Ascending aorta (tissue), 2 donors: ENCODE measurements at regions of chr4 and their contacts with region 1.

Region 1: GRCh38 chr4:56907489-56908205 is at the start of gene REST:
- DNase-seq: peak in 1 of 2 donors; percentile 88
- H3K4me3 ChIP-seq: peak within 1 kb of the TSS; percentile 92 to 94
- H3K27ac ChIP-seq: peak within 1 kb of the TSS; percentile 81 to 88
- H3K4me1 ChIP-seq: peaks cover 0 to 12% of the 10 kb centered on the region in 2 donors
- H3K27me3 ChIP-seq: no peaks in the 10 kb centered on the region
- CTCF ChIP-seq: no peak
- total RNA-seq, gene REST: 86.5 TPM

Region 2: DNA sequence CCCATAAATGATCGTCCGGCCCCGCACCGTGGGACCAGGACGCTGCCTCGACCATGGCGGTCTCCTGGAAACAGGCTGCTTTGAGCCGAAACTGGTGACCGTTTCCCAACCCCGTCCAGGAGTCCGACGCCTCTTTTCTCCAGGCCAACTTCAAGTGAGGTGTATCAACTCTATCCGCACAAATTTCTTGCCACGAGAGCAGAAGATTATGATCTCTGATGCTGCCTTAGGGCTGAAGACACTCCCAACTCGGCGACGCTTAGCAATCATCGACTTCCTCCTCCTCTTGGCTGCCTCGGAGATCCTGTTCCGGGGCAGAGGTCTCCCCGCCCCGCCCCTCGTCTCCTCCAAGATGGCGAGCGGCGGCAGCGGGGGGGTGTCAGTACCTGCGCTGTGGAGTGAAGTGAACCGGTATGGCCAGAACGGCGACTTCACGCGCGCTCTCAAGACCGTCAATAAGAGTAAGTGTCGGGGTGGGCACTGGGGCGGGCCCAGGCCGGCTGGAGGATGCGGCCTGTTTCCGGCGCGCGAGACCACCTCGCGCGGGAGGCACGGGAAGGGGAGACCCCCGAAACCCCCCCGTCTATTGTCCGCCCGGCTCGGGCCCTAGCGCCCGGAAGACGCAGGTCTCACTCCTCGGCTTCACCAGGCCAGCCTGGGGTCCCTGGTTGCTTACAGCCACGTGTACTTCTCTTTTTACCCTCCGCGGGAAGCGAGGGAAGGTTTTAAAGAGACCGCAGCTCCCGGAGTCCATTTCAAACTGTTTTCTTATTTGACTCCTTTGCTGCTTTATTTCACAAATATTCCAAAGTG is 440.2 kb before region 1 on chr4 and contains the start of gene SRP72:
- intact Hi-C with region 1: loop called (anchors 10 kb)
- DNase-seq: peak; percentile 66 to 94
- H3K4me3 ChIP-seq: peak within 1 kb of the TSS; percentile 93 to 96
- H3K27ac ChIP-seq: peak within 1 kb of the TSS; percentile 84 to 93
- H3K4me1 ChIP-seq: peaks cover 8 to 22% of the 10 kb centered on the region in 2 donors
- H3K27me3 ChIP-seq: no peaks in the 10 kb centered on the region
- CTCF ChIP-seq: no peak
- total RNA-seq, gene SRP72: 89.4 TPM

Region 3: DNA sequence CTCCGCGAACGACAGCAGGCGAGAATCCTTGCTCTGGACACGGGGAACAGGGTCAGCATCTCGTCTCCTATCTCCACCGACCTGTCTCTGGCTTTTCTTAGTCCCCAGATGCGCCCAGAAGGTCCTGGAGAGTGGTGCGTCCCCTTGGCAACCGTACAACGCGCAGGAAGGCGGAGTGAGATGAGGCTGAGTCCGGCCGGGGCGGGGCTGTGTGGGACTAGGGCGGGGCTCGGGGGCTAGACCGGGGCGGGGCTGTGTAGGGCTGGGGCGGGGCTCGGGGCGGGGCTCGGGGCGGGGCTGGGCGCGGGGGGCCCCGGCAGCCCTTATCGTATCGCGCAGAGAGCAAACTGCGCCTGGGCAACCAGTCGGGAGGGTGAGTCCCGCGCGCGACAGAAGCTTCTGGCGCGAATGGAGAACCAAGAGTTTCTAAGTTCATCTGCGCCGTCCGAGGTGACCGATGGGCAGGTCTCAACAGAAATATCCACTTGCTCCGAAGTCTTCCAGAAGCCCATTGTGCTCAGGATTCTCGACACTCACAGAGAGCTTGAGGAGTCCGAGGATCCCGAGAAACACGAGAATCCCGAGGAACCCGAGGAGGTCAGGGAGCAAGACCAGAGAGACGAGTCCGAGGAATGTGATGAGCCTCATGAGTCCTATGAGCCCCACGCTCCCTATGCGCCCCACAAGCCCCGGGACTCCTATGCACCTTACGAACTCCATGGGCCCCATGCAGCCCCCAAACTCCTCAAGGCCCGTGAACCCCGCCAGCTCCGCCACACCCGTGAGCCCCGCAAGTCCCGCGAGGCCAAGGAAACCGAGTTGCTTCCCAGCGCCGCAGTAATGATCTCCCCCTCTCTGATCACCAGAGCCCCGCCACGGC is 377.1 kb before region 1 on chr4:
- intact Hi-C with region 1: loop called (anchors 2 kb)
- DNase-seq: peak; percentile 48 to 93
- H3K4me3 ChIP-seq: peak overlapping the region; percentile 55 to 63
- H3K27ac ChIP-seq: no peak overlapping the region
- H3K4me1 ChIP-seq: peaks cover 0 to 7% of the 10 kb centered on the region in 2 donors
- H3K27me3 ChIP-seq: no peaks in the 10 kb centered on the region
- CTCF ChIP-seq: no peak

Region 4: DNA sequence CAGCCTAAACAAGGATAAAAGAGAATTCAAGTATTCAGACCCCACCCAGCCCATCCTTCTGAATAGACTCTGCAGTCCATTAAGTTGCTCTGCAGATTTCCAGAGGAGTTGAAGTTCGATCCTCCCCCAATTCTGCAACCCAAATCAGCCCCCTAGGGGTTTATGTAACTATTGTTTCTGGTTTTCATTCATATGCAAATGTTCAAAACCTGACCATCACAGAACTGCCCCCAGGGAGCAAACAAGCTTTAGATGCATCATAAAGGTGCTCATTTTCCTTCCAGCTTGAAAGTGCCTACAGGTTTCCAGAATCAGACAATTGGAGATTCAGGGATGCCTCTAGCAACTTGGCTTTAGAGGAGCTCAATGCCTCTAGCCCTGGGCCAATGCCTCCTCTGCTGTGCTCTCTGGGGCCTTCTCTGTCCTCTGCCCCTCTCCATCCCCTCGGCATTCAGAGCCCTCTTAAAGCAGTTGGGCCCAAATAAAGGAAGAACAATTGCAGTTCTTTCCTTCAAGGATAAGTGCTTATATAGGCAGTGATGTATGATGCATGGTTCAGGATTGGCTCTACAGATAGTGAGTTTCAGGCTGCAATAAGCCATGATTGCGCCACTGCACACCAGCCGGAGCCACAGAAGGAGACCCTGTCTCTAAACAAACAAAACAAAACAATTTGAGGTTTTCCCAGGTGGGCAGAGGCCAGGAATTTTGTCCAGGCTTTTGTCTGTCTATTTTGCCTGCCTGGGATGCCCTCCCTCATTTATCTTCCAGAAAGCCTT is 62.7 kb before region 1 on chr4:
- intact Hi-C with region 1: no loop called
- DNase-seq: no peak
- H3K4me3 ChIP-seq: no peak overlapping the region
- H3K27ac ChIP-seq: no peak overlapping the region
- H3K4me1 ChIP-seq: no peaks in the 10 kb centered on the region
- H3K27me3 ChIP-seq: no peaks in the 10 kb centered on the region
- CTCF ChIP-seq: no peak

Region 5: GRCh38 chr4:56958111-56958517 is 50.5 kb after region 1 on chr4:
- intact Hi-C with region 1: loop called (anchors 2 kb)
- DNase-seq: peak; percentile 53 to 97
- H3K4me3 ChIP-seq: peak overlapping the region in 1 of 2 donors; percentile 25
- H3K27ac ChIP-seq: peak overlapping the region; percentile 28 to 47
- H3K4me1 ChIP-seq: peaks cover 3 to 6% of the 10 kb centered on the region in 2 donors
- H3K27me3 ChIP-seq: no peaks in the 10 kb centered on the region
- CTCF ChIP-seq: no peak

Region 6: GRCh38 chr4:56977321-56978012 is 69.8 kb after region 1 on chr4 and contains the start of gene NOA1:
- intact Hi-C with region 1: loop called (anchors 1 kb)
- DNase-seq: peak; percentile 98 to 100
- H3K4me3 ChIP-seq: peak within 1 kb of the TSS; percentile 84 to 91
- H3K27ac ChIP-seq: peak within 1 kb of the TSS; percentile 90 to 94
- H3K4me1 ChIP-seq: peaks cover 5 to 19% of the 10 kb centered on the region in 2 donors
- H3K27me3 ChIP-seq: no peaks in the 10 kb centered on the region
- CTCF ChIP-seq: no peak
- total RNA-seq, gene NOA1: 36.6 TPM

Region 7: GRCh38 chr4:57110640-57111511 is 203.2 kb after region 1 on chr4:
- intact Hi-C with region 1: loop called (anchors 10 kb)
- DNase-seq: peak in 1 of 2 donors; percentile 82
- H3K4me3 ChIP-seq: peak overlapping the region; percentile 80 to 89
- H3K27ac ChIP-seq: peak overlapping the region; percentile 95 to 98
- H3K4me1 ChIP-seq: peaks cover 0 to 14% of the 10 kb centered on the region in 2 donors
- H3K27me3 ChIP-seq: no peaks in the 10 kb centered on the region
- CTCF ChIP-seq: no peak

Region 8: DNA sequence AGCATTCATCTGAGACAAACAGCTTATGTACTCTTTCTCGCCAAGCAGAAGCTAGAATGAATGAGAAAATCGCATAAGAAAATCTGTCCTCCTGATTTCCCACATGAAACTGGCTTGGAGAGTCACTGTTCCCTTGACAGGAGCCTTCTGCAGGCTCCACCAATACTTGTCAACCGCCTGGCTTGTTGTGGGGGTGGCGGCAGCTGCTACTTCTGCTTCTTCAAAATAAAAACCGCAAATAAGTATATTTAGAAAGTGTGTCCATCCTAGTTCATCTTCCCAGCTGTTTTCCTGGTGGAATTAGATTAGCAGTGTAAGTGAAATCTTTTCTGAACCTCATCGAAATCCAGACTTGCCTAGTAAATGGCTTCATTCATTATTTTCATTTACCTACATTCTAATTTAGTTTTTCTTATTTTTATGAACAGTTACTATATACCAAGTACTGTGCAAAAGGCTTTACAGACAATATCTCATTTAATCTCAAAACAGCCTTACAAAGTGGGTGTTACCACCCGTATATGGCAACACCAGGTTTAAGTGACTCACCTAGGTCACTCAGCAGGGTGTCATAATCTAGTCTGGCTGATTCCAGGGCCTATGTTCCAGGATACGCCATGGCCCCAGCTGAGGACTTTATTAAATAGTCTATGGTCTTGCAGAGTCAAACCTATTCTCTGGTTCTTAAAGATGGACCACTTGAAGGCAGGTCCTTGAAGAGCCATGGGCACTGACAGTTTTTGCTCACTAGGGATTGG is 307.2 kb after region 1 on chr4:
- intact Hi-C with region 1: no loop called
- DNase-seq: no peak
- H3K4me3 ChIP-seq: no peak overlapping the region
- H3K27ac ChIP-seq: no peak overlapping the region
- H3K4me1 ChIP-seq: no peaks in the 10 kb centered on the region
- H3K27me3 ChIP-seq: no peaks in the 10 kb centered on the region
- CTCF ChIP-seq: no peak